Activated CD4-positive, alpha-beta T cell treated with anti-CD3 and anti-CD28 coated beads for 36 hours (primary cell): ENCODE measurements at regions of chr9 and their contacts with region 1.

Region 1: GRCh38 chr9:37485389-37486219 is at the start of gene POLR1E:
- DNase-seq: peak; percentile 98
- ATAC-seq: peak; percentile 97
- H3K4me3 Mint-ChIP-seq: peak within 1 kb of the TSS; percentile 94
- H3K27ac Mint-ChIP-seq: peak within 1 kb of the TSS; percentile 93
- H3K4me1 Mint-ChIP-seq: peaks cover 41% of the 10 kb centered on the region
- H3K27me3 Mint-ChIP-seq: peaks cover 7% of the 10 kb centered on the region
- total RNA-seq, gene POLR1E: 67.5 to 69.2 TPM

Region 2: DNA sequence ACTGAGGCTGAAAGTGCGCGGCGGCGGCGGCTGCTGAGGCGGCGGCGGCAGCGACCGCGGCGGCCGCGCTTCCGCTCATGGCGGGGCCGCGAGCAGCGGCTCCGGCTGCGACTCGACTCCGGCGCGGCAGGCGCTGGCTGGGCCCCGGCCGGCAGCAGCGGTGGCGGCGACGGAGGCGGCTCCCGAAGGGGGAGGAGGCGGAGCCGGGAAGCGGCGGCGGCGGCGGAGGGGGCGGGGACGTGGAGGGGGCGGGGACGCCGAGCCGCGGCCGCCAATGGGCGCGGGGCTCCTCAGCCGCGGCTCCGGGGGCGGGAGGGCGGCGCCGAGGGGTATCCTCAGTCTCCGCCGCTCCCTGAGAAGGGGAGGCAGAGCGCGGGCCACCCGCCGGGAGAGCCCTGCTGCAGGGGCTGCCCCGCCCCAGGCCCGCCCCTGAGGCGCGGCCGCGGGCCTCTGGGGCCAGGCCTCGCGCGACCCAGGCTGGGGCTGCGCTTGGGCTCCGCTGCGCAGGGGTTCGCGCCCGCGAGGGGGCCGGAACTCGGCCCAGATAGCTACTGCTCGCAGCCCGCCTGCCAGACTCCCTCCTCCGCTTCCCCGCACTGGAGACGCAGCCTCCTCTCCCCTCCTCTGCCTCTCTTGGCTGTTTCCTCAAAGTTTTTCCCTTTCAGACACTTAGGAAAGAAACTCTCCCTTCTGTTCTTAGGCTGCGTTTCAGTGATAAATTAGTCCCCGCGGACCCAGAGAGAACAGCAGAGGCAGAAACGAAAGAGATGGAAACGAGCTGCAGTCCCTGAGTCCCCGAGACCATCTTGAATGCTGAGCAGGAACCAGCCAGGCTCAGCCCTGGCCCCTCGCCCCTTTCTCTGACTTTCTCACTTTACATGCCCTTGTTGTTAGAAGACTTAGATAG is 997.9 kb before region 1 on chr9:
- CTCF ChIA-PET with region 1: no interaction called
- POLR2A ChIA-PET with region 1: no interaction called
- intact Hi-C with region 1: loop called in 1 of 2 experiments (anchors 5 kb)
- DNase-seq: peak; percentile 95
- ATAC-seq: peak; percentile 93
- H3K4me3 Mint-ChIP-seq: peak overlapping the region; percentile 93
- H3K27ac Mint-ChIP-seq: peak overlapping the region; percentile 99
- H3K4me1 Mint-ChIP-seq: peaks cover 63% of the 10 kb centered on the region
- H3K27me3 Mint-ChIP-seq: no peaks in the 10 kb centered on the region

Region 3: GRCh38 chr9:36935768-36936497 is 549.7 kb before region 1 on chr9:
- CTCF ChIA-PET with region 1: no interaction called
- POLR2A ChIA-PET with region 1: no interaction called
- intact Hi-C with region 1: no loop called
- DNase-seq: no peak
- ATAC-seq: peak; percentile 36
- H3K4me3 Mint-ChIP-seq: no peak overlapping the region
- H3K27ac Mint-ChIP-seq: no peak overlapping the region
- H3K4me1 Mint-ChIP-seq: peaks cover 3% of the 10 kb centered on the region
- H3K27me3 Mint-ChIP-seq: peaks cover 7% of the 10 kb centered on the region

Region 4: DNA sequence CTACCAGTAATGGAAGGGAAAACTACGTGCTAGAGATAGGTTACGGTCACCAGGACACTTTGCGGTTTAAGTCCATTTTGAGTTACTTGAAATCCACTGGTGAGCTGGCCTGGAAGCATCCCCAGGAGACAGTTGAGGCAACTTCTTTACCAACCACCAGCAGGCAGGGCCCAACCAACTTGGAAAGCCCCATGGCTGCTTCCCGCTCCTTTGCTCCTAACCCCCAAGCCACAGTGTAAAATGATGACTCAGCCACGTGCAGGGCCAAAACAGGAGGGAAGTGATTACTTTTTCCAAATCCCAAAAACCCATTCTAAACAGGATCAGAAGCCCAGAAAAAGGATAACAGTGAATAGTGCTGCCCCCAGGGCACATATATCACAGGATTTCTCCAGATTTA is 539.0 kb before region 1 on chr9:
- CTCF ChIA-PET with region 1: no interaction called
- POLR2A ChIA-PET with region 1: no interaction called
- intact Hi-C with region 1: no loop called
- DNase-seq: no peak
- ATAC-seq: no peak
- H3K4me3 Mint-ChIP-seq: no peak overlapping the region
- H3K27ac Mint-ChIP-seq: no peak overlapping the region
- H3K4me1 Mint-ChIP-seq: no peaks in the 10 kb centered on the region
- H3K27me3 Mint-ChIP-seq: peaks cover 13% of the 10 kb centered on the region

Region 5: DNA sequence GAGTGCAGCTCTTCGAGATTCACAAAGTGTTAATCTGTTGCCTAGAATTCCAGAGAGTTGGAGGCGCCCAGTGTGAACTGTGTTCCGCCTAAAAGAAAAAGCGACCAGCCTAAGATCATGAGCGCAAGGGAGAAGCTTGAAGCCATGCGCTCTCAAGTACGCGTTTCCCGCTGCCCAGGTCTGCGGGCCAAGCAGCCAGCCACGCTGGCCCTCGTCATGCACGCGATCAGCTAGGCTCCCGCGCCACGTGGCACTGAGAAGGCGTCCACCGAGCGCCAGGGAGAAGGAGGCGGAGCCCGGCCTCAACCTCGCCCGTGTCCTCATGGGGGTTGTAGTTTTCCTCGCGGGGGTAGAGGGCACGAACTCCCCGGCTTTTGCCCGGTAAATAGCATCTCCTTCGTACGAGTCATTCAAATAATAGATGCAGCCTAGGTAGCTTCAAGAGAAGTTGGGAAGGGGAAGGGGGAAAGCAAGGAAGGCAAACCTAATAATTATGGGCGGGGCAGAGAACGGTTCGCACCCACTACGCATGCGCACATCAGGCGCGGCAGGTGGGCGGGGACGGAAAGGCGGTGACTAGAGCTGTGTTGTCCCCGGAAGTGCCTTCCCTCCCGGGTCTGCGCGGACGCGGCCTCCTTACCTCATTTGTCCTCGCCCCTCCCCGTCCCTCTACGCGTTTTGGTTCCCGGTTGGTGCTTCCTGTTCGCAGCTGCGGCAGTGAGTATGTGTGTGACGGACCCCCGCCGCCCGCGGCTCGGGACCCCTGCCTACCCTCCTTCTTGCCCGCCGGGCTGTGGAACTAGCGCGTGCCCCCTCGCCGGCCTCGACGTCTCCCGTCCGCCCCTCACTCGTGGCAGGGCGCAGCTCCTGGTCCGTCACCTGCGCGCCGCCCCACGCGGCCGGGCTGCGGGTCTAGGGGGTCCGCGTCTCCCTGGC is 365.4 kb before region 1 on chr9 and contains the start of gene ZCCHC7:
- CTCF ChIA-PET with region 1: no interaction called
- POLR2A ChIA-PET with region 1: no interaction called
- intact Hi-C with region 1: loop called in 1 of 2 experiments (anchors 1 kb)
- DNase-seq: peak; percentile 98
- ATAC-seq: peak; percentile 98
- H3K4me3 Mint-ChIP-seq: peak within 1 kb of the TSS; percentile 80
- H3K27ac Mint-ChIP-seq: peak within 1 kb of the TSS; percentile 96
- H3K4me1 Mint-ChIP-seq: peaks cover 31% of the 10 kb centered on the region
- H3K27me3 Mint-ChIP-seq: no peaks in the 10 kb centered on the region
- total RNA-seq, gene ZCCHC7: 29.9 to 50.2 TPM

Region 6: DNA sequence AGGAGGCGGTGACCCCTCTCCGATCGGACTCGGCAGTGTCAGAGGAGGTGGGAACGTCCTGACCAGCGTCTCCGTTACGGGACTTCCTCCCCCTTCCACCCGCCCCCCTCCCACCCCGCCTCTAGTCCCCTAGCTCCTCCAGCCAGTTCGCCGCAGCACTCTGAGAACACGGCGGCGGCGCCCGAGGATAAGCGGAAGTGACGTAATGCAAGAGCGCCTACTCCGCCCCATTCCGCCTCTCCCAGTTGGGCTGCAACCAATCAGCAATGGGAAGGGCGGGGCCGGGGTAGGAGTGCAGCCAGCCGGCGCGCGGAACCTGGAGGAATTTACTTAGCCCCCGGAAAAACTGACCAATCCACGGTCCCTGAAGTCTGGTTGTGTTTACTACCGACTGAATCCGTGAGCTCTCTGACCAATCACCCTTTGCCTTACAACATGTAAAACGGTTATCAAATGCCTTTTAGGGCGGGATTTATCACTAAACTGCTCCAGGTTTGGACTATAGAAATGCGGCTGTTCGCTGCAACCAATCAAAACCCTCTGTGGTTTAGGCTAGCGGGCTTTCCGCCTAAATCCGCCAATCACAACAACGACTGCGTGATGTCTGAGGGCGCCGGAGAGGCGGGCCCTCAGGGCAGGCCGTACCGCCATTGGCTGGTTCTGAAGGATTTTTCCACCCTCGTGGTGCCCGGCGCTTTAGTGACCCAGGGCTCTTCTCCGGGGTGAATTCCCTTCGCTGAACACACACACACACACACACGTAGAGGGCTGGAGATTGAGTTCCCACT is 20.2 kb before region 1 on chr9 and contains the start of gene ZBTB5:
- CTCF ChIA-PET with region 1: interaction called, 15 read pairs
- POLR2A ChIA-PET with region 1: interaction called, 13 read pairs
- intact Hi-C with region 1: loop called (anchors 1 kb)
- DNase-seq: peak; percentile 99
- ATAC-seq: peak; percentile 85
- H3K4me3 Mint-ChIP-seq: peak within 1 kb of the TSS; percentile 97
- H3K27ac Mint-ChIP-seq: peak within 1 kb of the TSS; percentile 96
- H3K4me1 Mint-ChIP-seq: peaks cover 30% of the 10 kb centered on the region
- H3K27me3 Mint-ChIP-seq: no peaks in the 10 kb centered on the region
- total RNA-seq, gene ZBTB5: 8.0 to 9.1 TPM

Region 7: DNA sequence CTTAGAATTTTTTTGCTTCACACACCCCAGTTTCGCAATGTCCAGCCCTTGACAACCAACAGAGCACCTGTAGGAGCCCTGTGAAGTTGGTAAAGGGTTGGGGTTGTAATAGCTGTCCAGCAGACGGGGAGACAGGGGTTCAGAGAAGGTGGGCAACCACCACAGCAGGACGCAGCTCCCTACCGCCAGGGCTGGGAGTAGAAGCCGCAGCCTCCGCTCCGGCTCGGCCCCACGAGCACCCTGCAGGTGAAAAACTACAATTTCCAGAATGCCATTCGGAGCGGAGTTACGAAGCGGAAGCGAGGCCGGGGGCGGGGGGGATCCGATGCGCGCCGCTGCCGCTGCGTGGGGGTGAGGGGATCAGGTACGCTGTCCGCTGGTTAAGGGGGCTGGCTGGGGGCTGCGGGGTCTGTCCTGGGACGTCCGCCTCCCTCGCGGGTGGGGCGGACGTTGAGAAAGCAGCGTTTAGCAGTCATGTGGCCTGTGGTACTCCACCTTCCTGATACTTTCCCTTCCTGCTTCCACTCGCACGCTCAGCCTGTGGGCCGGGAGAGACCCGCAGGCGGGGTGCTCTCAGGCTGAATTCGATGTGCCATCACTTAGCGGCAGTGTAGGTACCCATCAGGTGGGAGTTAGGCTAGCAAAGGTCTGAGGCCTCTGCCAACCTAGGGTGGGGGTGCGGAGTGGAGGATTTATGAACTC is 268.0 kb after region 1 on chr9 and contains the start of gene TRMT10B:
- CTCF ChIA-PET with region 1: no interaction called
- POLR2A ChIA-PET with region 1: no interaction called
- intact Hi-C with region 1: loop called (anchors 1 to 10 kb)
- DNase-seq: peak; percentile 88
- ATAC-seq: peak; percentile 94
- H3K4me3 Mint-ChIP-seq: peak within 1 kb of the TSS; percentile 91
- H3K27ac Mint-ChIP-seq: peak within 1 kb of the TSS; percentile 92
- H3K4me1 Mint-ChIP-seq: peaks cover 32% of the 10 kb centered on the region
- H3K27me3 Mint-ChIP-seq: no peaks in the 10 kb centered on the region
- total RNA-seq, gene TRMT10B: 12.3 to 15.6 TPM